ENCODE measurements at regions of chr14 and their contacts with region 1.

Region 1: GRCh38 chr14:102774391-102775153 is 2.7 kb upstream of the TRAF3 start:
- DNase-seq: peak; percentile 48 to 91 (median 59)
- ATAC-seq: peak; percentile 59
- H3K4me3 ChIP-seq: no peak overlapping the region
- H3K4me3 Mint-ChIP-seq: peak overlapping the region; percentile 83
- H3K27ac ChIP-seq: peak overlapping the region; percentile 64 to 92
- H3K27ac Mint-ChIP-seq: peak overlapping the region; percentile 88
- H3K4me1 ChIP-seq: peaks cover 39% of the 10 kb centered on the region
- H3K4me1 Mint-ChIP-seq: peaks cover 26% of the 10 kb centered on the region
- H3K27me3 ChIP-seq: no peaks in the 10 kb centered on the region
- H3K27me3 Mint-ChIP-seq: no peaks in the 10 kb centered on the region
- CTCF ChIP-seq: peak; percentile 73

Region 2: DNA sequence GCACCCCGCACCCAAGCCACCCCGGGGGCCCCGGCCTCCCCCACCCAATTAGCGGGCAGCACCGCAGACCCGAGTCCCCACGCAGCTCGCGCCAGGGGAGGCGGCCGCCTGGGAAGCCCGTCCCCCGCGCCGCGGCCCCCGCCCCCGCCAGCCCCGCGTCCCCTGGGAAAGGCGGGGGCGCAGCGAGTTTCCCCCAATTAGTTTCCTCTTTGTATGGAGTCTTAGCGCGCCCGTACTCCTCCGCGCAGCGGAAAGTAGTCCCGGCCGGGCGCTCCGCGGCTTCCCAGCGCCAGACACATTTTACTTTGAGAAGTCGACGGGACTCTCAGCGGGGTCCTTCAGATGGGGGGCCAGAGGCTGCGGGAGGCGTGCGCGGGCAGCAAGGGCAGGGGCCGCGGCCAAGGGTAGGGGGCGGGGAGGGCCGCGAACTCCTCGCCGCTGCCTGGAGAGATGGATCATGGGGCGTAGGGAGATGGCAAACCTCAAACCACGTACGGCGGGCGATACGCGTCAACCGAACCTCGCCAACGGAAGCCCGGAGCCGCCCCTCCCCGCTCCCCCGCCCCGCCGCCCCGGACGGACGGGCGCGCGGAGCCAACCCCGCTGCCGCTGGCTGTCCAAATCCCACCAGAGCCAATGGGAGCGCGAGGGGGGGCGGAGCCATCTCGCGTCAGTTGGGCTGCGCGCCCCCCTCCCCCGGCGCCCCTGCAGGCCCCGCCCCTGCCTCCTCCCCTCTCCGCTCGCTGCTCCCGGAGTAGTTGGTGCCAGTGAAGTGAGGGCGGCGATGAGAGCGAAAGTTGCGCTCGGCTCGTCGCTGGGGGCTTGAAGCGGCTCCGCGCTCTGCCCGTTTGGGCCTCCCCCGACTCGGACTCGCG is 182.4 kb before region 1 on chr14 and contains the start of gene RCOR1:
- CTCF ChIA-PET with region 1: no interaction called
- POLR2A ChIA-PET with region 1: no interaction called
- intact Hi-C with region 1: loop called (anchors 2 to 10 kb)
- DNase-seq: peak; percentile 97 to 99 (median 98)
- ATAC-seq: peak; percentile 88
- H3K4me3 ChIP-seq: peak within 1 kb of the TSS; percentile 77
- H3K4me3 Mint-ChIP-seq: peak within 1 kb of the TSS; percentile 99
- H3K27ac ChIP-seq: peak within 1 kb of the TSS; percentile 86 to 88
- H3K27ac Mint-ChIP-seq: peak within 1 kb of the TSS; percentile 95
- H3K4me1 ChIP-seq: peaks cover 25% of the 10 kb centered on the region
- H3K4me1 Mint-ChIP-seq: peaks cover 30% of the 10 kb centered on the region
- H3K27me3 ChIP-seq: no peaks in the 10 kb centered on the region
- H3K27me3 Mint-ChIP-seq: no peaks in the 10 kb centered on the region
- CTCF ChIP-seq: no peak
- total RNA-seq, gene RCOR1: 20.5 to 23.1 TPM

Region 3: DNA sequence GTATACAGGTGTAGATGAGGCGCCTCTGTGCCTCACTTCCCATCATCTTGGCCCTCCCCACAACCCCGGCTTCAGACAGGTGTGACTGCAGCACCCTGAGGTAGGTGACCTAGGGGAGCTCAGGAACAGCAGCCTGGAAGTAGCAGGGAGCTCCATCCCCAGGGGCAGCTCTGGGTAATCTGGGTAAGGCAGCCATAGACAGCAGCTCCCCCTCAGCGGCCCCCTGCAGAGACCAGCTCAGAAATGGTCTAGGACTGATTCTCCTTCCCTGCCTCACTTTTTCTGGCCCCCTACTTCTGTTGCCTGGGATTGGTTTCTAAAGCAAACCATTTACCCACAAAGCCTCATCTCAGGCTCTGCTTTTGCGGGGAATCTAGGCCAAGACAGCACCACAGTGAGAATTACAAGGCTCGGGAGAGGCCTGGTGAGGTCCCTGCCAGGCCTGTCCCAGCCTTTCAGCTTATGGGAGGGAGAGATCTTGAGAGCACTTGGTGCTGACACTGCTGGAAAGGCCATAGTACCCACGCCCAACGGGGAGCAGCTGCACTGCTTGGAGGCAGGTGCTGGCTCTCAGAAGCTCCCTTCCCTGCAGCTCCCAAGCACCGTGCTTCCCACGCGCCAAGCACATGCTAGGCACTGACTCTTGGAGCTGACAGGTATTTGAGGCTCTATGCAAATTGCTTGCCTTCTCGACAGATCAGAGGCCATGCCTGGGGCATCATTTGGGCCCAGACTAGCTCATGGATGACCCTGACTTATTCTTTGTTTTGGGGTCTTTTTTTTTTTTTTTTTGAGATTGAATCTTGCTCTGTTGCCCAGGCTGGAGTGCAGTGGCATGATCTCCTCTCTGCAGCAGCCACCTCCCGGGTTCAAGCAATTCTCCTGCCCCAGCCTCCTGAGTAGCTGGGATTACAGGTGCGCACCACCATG is 42.4 kb before region 1 on chr14:
- CTCF ChIA-PET with region 1: no interaction called
- POLR2A ChIA-PET with region 1: no interaction called
- intact Hi-C with region 1: no loop called
- DNase-seq: no peak
- ATAC-seq: no peak
- H3K4me3 ChIP-seq: no peak overlapping the region
- H3K4me3 Mint-ChIP-seq: no peak overlapping the region
- H3K27ac ChIP-seq: no peak overlapping the region
- H3K27ac Mint-ChIP-seq: no peak overlapping the region
- H3K4me1 ChIP-seq: no peaks in the 10 kb centered on the region
- H3K4me1 Mint-ChIP-seq: no peaks in the 10 kb centered on the region
- H3K27me3 ChIP-seq: no peaks in the 10 kb centered on the region
- H3K27me3 Mint-ChIP-seq: no peaks in the 10 kb centered on the region
- CTCF ChIP-seq: no peak

Region 4: DNA sequence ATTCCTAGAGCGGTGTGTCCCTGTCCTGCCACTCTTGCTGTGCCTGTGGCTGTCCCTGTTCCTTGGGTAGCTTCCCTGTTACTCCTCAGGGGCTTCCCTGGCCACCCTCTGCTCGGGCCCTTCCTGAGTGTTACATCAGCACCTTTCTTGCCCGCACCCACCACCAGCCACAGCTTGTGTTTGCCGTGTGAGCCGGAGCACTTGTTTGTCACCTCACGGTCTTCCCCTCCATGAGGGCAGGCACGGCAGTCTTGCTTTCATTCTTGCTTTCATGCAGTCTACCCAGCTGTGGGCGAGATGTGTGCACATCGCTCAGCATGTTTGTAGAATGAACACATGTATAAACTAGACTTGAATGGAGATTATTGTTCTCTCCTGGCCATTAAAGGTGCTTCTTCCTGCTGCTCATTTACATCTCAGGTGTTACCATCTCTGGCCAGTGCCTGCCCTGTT is 44.6 kb after region 1 on chr14:
- CTCF ChIA-PET with region 1: interaction called, 4 read pairs
- POLR2A ChIA-PET with region 1: interaction called, 3 read pairs
- intact Hi-C with region 1: loop called in 1 of 2 experiments (anchors 5 kb)
- DNase-seq: peak in 12 of 14 experiments; percentile 17 to 76 (median 30)
- ATAC-seq: peak; percentile 70
- H3K4me3 ChIP-seq: peak overlapping the region; percentile 6
- H3K4me3 Mint-ChIP-seq: peak overlapping the region; percentile 26
- H3K27ac ChIP-seq: peak overlapping the region; percentile 12 to 17
- H3K27ac Mint-ChIP-seq: peak overlapping the region; percentile 50
- H3K4me1 ChIP-seq: peaks cover 54% of the 10 kb centered on the region
- H3K4me1 Mint-ChIP-seq: peaks cover 88% of the 10 kb centered on the region
- H3K27me3 ChIP-seq: no peaks in the 10 kb centered on the region
- H3K27me3 Mint-ChIP-seq: no peaks in the 10 kb centered on the region
- CTCF ChIP-seq: no peak

Region 5: GRCh38 chr14:102917469-102918211 is 143.1 kb after region 1 on chr14:
- CTCF ChIA-PET with region 1: no interaction called
- POLR2A ChIA-PET with region 1: no interaction called
- intact Hi-C with region 1: loop called in 1 of 2 experiments (anchors 2 kb)
- DNase-seq: peak; percentile 25 to 70 (median 50)
- ATAC-seq: peak; percentile 57
- H3K4me3 ChIP-seq: no peak overlapping the region
- H3K4me3 Mint-ChIP-seq: no peak overlapping the region
- H3K27ac ChIP-seq: peak overlapping the region in 1 of 2 donors; percentile 7
- H3K27ac Mint-ChIP-seq: no peak overlapping the region
- H3K4me1 ChIP-seq: peaks cover 2% of the 10 kb centered on the region
- H3K4me1 Mint-ChIP-seq: no peaks in the 10 kb centered on the region
- H3K27me3 ChIP-seq: no peaks in the 10 kb centered on the region
- H3K27me3 Mint-ChIP-seq: no peaks in the 10 kb centered on the region
- CTCF ChIP-seq: peak; percentile 44

Measured in CD4-positive, alpha-beta T cell (primary cell).